GM23248 (cell line): ENCODE measurements at regions of chr5 and their contacts with region 1.

Region 1: DNA sequence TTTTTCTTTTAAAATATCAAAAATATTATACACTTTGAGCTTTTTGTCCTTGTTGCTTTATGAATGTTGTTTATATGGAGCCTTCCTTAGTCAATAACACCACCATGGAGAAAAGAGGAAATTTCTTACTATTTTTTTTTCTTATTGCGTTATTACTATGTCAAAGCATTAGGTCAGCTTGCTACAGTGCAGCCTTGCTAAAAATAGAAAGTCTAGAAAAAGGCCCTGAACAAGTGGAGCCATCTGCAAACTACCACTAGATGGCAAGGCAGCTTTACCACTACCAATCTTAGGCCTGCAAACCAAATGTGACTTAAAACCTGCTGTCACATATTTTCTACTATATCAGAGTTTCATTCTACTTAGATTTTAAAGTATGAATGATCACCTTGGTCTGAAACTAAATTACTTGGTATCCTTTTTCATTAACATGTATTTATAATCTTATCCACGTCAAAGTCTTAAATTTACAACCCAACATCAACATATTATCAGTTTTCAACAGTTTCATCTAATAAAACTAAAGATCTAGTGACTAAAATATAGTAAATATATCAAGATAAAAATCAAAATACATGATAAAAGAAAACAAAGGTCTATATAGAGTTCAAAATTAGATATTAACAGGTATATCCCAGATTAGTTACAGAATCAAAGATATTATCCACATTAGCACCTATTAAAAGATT is 113.1 kb upstream of the ACOT12 start:
- DNase-seq: peak; percentile 94
- H3K4me3 ChIP-seq: no peak overlapping the region
- H3K27ac ChIP-seq: no peak overlapping the region
- H3K4me1 ChIP-seq: no peaks in the 10 kb centered on the region
- H3K27me3 ChIP-seq: no peaks in the 10 kb centered on the region

Region 2: GRCh38 chr5:81326554-81326953 is 180.5 kb before region 1 on chr5:
- in situ Hi-C with region 1: no loop called
- DNase-seq: peak; percentile 15
- H3K4me3 ChIP-seq: no peak overlapping the region
- H3K27ac ChIP-seq: no peak overlapping the region
- H3K4me1 ChIP-seq: no peaks in the 10 kb centered on the region
- H3K27me3 ChIP-seq: no peaks in the 10 kb centered on the region

Region 3: GRCh38 chr5:81751009-81751835 is 244.2 kb after region 1 on chr5 and contains the start of gene SSBP2:
- in situ Hi-C with region 1: loop called (anchors 25 kb)
- DNase-seq: peak; percentile 99
- H3K4me3 ChIP-seq: peak within 1 kb of the TSS; percentile 84
- H3K27ac ChIP-seq: peak within 1 kb of the TSS; percentile 98
- H3K4me1 ChIP-seq: peaks cover 23% of the 10 kb centered on the region
- H3K27me3 ChIP-seq: no peaks in the 10 kb centered on the region
- total RNA-seq, gene SSBP2: 22.0 and 25.5 TPM in 2 replicates

Region 4: DNA sequence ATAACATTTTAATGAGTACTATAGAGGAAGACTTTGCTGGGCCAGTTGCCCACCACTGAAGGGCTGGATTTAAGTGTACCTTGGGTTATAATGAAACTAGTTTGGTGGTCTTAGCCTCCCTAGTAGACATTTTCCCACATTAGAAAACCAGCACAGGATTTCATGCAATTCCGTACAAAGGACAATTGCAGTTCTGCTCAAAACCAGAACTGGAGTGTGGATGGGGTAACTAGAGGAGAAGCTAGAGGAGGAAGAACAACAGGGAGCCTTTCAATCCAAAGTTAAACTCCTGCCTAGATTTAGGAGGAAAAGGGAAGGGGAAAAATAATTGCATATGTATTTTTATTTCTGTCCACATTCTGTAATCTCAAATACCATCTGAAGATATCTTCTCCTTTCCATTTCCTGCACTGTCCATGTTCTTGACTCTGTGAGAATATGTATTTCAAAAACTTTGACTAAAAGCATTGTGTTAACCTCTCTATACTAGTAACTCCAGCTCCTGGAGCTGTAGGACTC is 341.4 kb after region 1 on chr5:
- in situ Hi-C with region 1: loop called (anchors 10 kb)
- DNase-seq: no peak
- H3K4me3 ChIP-seq: no peak overlapping the region
- H3K27ac ChIP-seq: no peak overlapping the region
- H3K4me1 ChIP-seq: peaks cover 23% of the 10 kb centered on the region
- H3K27me3 ChIP-seq: no peaks in the 10 kb centered on the region

Region 5: DNA sequence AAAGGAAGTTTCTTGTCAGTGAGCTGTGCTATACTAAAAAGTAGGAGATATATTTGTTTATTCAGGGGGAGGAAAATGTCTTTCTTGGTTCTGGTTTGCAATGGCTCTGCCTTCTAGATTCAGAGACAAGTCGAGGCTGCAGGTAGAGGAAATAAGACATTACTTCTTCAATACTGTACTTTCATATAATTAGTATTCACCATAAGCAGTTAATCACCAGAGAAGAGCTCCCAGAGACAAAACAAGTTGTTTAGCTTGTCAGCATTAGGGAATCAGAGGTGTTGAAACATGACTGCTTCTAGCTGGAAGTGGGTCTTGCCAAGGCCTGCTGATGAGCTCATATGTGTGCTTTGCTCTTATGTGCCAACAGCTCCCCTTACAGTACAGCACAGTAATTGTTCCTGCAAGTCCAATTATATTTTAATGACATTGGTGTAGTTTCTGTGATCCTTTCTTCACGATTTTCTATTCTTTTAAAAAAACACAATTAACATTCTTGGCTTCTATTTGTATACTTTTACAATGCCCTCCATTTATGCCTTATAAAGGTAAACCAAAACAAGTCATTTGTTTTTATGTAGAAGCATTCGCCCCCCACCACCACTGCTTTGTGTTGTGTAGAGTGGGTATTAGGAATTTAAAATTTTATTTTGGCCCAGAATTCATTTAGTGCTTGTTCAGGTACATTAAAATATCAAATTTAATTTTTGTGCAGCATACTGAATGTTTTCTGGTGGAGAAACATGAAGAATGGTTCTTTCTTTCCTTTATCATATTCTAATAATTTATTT is 658.9 kb after region 1 on chr5:
- in situ Hi-C with region 1: loop called (anchors 25 kb)
- DNase-seq: peak; percentile 97
- H3K4me3 ChIP-seq: no peak overlapping the region
- H3K27ac ChIP-seq: peak overlapping the region; percentile 70
- H3K4me1 ChIP-seq: peaks cover 37% of the 10 kb centered on the region
- H3K27me3 ChIP-seq: no peaks in the 10 kb centered on the region

Region 6: DNA sequence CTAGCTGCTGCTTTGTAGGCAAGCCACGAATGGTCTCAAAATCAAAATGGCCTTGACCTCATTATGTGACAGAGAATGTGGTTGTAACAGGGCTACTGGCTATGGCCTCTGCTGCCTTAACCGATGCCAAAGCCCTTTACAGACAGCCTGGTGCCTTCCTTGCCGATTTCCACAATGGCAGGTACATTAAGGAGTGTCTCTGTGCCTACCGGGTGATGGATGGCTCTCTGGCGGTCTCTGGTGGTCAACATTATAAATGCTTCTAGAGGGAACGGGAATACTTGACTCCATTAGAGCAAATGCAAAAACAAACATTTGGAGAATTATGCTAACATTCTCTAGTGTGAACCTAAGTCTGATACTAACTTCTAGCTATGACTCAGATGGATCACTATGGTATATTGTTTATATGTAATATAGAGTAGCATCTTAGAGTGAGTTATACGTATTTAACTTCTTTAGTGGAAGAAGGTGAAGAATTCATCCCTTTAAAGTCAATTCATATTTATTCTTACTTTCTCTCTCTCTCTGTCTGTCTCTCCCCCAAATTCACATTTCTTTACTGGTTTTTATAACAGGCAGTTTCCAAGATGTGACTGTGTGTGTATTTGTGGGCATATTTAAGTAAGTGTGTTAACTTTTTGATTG is 718.6 kb after region 1 on chr5:
- in situ Hi-C with region 1: loop called (anchors 25 kb)
- DNase-seq: peak; percentile 61
- H3K4me3 ChIP-seq: no peak overlapping the region
- H3K27ac ChIP-seq: no peak overlapping the region
- H3K4me1 ChIP-seq: 0 out of 2 replicates have a peak, but pooled peaks cover 3% of the 10 kb centered on the region
- H3K27me3 ChIP-seq: no peaks in the 10 kb centered on the region